WTC11 (cell line): ENCODE measurements at regions of chr14 and their contacts with region 1.

Region 1: GRCh38 chr14:67666750-67667449 is 7.5 kb downstream of the VTI1B start:
- DNase-seq: no peak
- ATAC-seq: peak; percentile 93
- H3K4me3 Mint-ChIP-seq: no peak overlapping the region
- H3K27ac Mint-ChIP-seq: peak overlapping the region; percentile 85
- H3K4me1 Mint-ChIP-seq: peaks cover 13% of the 10 kb centered on the region
- H3K27me3 Mint-ChIP-seq: no peaks in the 10 kb centered on the region
- CTCF ChIP-seq: no peak

Region 2: GRCh38 chr14:67583711-67584644 is 82.9 kb before region 1 on chr14:
- CTCF ChIA-PET with region 1: interaction called, 23 read pairs
- POLR2A ChIA-PET with region 1: no interaction called
- DNase-seq: peak; percentile 29
- ATAC-seq: peak; percentile 92
- H3K4me3 Mint-ChIP-seq: no peak overlapping the region
- H3K27ac Mint-ChIP-seq: no peak overlapping the region
- H3K4me1 Mint-ChIP-seq: no peaks in the 10 kb centered on the region
- H3K27me3 Mint-ChIP-seq: no peaks in the 10 kb centered on the region
- CTCF ChIP-seq: peak; percentile 36; the same call in 1 of the 2 replicates

Region 3: DNA sequence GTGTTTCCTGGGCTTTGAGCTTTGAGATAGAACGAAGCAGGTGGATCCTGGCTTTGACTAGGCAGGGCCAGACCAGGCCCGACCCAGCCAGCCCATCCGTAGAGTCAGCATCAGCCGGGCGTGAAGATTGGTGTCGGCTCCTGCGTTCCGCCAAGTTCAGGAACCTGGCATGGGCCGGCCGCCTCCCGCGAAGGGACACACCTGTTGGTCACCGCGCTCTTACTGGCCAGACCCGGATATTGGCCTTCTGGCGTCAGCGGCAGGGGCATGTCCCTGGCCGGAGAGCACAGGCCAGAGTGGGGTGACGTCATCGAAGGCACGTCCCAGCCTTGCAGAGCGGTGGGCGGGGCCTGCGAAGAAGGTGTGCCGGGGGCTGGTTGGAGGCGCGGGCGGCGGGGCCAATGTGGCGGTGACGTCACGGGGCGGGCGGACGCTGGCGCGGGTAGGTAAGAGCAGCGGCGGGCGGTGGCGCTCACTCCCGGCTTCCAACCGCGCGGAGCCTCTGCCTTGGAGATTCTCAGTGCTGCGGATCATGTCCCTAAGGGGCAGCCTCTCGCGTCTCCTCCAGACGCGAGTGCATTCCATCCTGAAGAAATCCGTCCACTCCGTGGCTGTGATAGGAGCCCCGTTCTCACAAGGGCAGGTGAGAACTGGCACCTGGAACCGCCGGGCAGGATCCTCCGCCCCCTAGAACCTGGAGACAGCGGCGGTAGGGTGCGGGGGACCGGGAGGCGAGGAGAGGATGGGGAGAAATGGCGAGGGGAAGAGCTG is 47.3 kb before region 1 on chr14 and contains the start of gene ARG2:
- CTCF ChIA-PET with region 1: interaction called, 49 read pairs
- POLR2A ChIA-PET with region 1: interaction called, 5 read pairs
- DNase-seq: peak; percentile 100
- ATAC-seq: peak; percentile 91
- H3K4me3 Mint-ChIP-seq: peak within 1 kb of the TSS; percentile 92
- H3K27ac Mint-ChIP-seq: peak within 1 kb of the TSS; percentile 92
- H3K4me1 Mint-ChIP-seq: peaks cover 35% of the 10 kb centered on the region
- H3K27me3 Mint-ChIP-seq: peaks cover 46% of the 10 kb centered on the region
- CTCF ChIP-seq: no peak
- total RNA-seq, gene ARG2: 29.8 to 38.5 TPM (median 33.0 TPM) in 3 replicates